IMR-90 (cell line): ENCODE measurements at regions of chr21 and their contacts with region 1.

Region 1: DNA sequence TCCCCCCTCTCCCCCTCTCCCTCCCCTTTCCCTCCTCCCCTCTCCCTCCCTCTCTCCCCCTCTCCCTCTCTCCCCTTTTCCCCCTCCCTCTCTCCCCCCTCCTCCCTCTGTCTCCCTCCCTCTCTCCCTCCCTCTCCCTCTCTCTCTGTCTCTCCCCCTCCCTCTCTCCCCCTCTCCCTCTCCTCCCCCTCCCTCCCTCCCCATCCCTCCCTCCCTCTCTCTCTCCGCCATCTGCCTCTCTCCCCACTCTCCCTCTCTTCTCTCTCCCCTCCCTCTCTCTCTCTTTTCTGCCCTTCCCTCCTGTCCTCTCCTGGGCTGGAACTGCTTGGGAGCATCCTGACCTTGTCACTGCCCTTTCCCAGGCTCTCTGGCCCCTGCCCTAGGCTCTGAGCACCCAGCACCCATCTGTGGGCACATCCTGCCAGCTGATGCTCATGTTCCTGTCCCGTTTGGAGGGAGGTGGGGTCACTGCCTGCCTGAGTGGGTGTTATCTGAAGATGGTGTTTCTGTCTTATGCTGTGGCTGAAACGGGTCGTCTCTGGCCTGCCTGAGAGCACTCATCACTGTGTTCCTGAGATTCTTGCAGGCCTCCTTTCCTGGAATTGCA is 10.8 kb downstream of the FTCD start:
- DNase-seq: no peak
- ATAC-seq: no peak
- H3K4me3 ChIP-seq: no peak overlapping the region
- H3K27ac ChIP-seq: no peak overlapping the region
- H3K4me1 ChIP-seq: 0 out of 2 replicates have a peak, but pooled peaks cover 2% of the 10 kb centered on the region
- H3K27me3 ChIP-seq: no peaks in the 10 kb centered on the region
- CTCF ChIP-seq: no peak
- POLR2A ChIP-seq: no peak
- RAD21 ChIP-seq: no peak

Region 2: DNA sequence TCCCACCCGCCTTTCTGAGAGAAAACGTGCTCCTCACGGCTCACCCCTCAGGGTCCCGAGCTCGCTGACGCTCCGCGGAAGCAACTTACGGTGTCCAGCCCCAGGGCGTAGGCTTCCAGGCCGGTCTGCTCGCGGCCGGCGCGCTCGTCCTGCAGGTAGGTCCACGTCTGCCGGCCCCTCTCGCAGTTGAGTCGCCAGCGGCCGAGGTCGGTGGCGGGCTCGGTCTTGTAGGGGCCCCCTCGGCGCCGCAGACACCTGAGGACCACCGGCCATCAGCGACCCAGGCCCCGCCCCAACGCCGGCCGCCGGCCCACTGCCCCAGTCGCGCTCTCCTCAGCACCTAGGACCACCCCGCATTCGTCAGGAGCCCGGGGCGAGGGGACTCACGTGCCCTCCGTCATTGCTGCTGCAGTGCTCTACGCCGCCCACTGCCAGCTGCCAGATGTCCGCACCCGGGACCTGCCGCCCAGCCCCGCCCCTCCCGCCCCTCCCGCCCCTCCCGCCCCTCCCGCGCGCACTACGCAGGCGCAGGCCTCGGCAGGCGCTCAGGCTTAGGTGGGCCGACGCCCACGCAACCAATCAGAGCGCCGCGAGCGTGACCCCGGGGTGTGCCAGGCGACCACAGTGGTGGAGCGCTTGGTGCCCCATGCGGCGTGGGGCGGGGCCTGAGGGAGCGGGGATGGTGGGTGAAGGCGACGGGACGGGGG is 83.9 kb after region 1 on chr21 and contains the start of gene LSS:
- CTCF ChIA-PET with region 1: interaction called, 3 read pairs
- POLR2A ChIA-PET with region 1: no interaction called
- dilution Hi-C with region 1: no loop called
- in situ Hi-C with region 1: no loop called
- intact Hi-C with region 1: loop called (anchors 1 kb)
- DNase-seq: peak; percentile 97
- ATAC-seq: peak; percentile 96
- H3K4me3 ChIP-seq: peak within 1 kb of the TSS; percentile 98
- H3K27ac ChIP-seq: peak within 1 kb of the TSS; percentile 80
- H3K4me1 ChIP-seq: peaks cover 13% of the 10 kb centered on the region
- H3K27me3 ChIP-seq: no peaks in the 10 kb centered on the region
- CTCF ChIP-seq: no peak
- POLR2A ChIP-seq: peak; percentile 68
- RAD21 ChIP-seq: no peak
- total RNA-seq, gene LSS: 35.3 and 43.4 TPM in 2 replicates

Region 3: DNA sequence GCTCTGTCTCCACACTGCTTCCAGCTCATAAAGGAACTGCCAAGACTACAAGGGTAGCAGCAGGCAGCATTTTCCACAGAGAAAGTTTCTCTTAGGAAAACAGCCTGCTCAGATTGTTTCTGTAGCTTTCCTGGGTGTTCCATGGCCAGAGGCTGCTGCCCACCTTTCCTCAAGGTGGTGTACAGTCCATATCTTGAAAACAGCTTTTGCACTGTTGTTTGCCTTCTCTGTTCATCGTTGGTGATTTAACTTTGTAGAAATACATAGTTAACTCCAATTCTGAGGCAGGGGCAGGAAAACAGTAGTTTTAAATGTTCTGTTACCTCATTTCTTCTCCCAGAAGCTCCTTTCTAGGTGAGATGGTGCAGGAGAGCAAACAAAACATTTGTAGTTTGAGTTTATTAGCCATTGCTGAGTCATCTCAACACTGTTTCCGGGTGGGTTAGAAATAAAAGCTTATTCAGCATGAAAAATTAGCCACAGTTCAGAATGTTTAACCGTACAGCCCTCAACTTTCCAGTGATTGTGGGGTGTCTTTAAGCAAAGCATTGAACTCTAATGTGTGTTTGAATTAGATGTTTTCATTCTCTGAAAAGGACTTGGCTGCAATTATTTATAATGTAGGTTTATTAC is 355.8 kb after region 1 on chr21:
- CTCF ChIA-PET with region 1: no interaction called
- POLR2A ChIA-PET with region 1: no interaction called
- dilution Hi-C with region 1: no loop called
- in situ Hi-C with region 1: no loop called
- intact Hi-C with region 1: no loop called
- DNase-seq: peak; percentile 40
- ATAC-seq: peak; percentile 72
- H3K4me3 ChIP-seq: no peak overlapping the region
- H3K27ac ChIP-seq: 0 out of 2 replicates have a peak overlapping the region, but pooled peaks have one; percentile 3
- H3K4me1 ChIP-seq: peaks cover 2% of the 10 kb centered on the region
- H3K27me3 ChIP-seq: no peaks in the 10 kb centered on the region
- CTCF ChIP-seq: no peak
- POLR2A ChIP-seq: no peak
- RAD21 ChIP-seq: no peak